PC-3 (cell line): ENCODE measurements at regions of chr5 and their contacts with region 1.

Region 1: GRCh38 chr5:140926443-140927227 is 536 bp downstream of the PCDHAC1 start:
- DNase-seq: peak; percentile 82
- ATAC-seq: peak; percentile 92
- H3K4me3 ChIP-seq: peak overlapping the region; percentile 91
- H3K27ac ChIP-seq: peak overlapping the region; percentile 45
- H3K4me1 ChIP-seq: peaks cover 8% of the 10 kb centered on the region
- H3K27me3 ChIP-seq: no peaks in the 10 kb centered on the region
- CTCF ChIP-seq: peak; percentile 76

Region 2: DNA sequence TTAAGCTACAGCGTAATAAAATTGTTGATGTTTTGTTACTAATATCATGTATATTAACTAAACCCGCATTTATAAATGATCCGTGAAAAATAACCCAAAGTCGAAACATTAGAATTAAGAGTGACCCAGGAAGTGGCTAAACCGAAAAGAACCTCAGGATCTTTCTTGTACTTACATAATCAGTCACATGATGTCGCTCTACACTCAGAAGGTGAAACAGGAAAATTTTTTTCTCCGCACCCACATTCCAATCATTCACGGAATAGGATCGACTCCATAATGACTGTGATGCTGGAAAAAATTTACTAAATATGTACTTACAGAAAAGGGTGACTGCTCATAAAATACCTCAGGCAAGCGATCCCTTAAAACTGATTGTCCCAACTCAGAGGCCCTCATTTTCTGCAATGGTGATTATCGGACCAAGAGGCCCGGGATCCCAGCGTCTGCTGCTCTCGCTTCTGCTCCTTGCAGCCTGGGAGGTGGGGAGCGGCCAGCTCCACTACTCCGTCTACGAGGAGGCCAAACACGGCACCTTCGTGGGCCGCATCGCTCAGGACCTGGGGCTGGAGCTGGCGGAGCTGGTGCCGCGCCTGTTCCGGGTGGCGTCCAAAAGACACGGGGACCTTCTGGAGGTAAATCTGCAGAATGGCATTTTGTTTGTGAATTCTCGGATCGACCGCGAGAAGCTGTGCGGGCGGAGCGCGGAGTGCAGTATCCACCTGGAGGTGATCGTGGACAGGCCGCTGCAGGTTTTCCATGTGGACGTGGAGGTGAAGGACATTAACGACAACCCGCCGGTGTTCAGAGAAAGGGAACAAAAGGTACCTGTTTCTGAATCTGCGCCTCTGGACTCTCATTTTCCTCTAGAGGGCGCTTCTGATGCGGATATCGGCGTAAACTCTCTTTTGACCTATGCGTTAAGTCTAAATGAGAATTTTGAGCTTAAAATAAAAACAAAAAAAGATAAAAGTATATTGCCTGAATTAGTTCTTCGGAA is 51.3 kb before region 1 on chr5 and contains the start of gene PCDHA12:
- CTCF ChIA-PET with region 1: no interaction called
- POLR2A ChIA-PET with region 1: interaction called, 3 read pairs
- intact Hi-C with region 1: loop called (anchors 2 kb)
- DNase-seq: peak; percentile 82
- ATAC-seq: peak; percentile 80
- H3K4me3 ChIP-seq: peak within 1 kb of the TSS; percentile 86
- H3K27ac ChIP-seq: peak within 1 kb of the TSS; percentile 42; the same call in 1 of the 2 replicates
- H3K4me1 ChIP-seq: peaks cover 14% of the 10 kb centered on the region
- H3K27me3 ChIP-seq: no peaks in the 10 kb centered on the region
- CTCF ChIP-seq: peak; percentile 67
- total RNA-seq, gene PCDHA12: 7.0 and 8.2 TPM in 2 replicates

Region 3: DNA sequence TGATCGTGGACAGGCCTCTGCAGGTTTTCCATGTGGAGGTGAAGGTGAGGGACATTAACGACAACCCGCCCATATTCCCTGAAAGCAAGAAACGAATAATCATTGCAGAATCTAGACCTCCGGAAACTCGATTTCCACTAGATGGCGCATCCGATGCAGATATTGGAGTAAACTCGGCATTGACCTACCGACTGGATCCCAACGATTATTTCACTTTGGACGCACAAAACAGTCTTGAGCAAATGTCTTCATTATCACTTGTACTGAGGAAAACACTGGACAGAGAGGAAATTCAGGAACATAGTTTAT is 44.1 kb before region 1 on chr5:
- CTCF ChIA-PET with region 1: interaction called, 3 read pairs
- POLR2A ChIA-PET with region 1: no interaction called
- intact Hi-C with region 1: loop called (anchors 1 kb)
- DNase-seq: peak; percentile 81
- ATAC-seq: peak; percentile 74
- H3K4me3 ChIP-seq: peak overlapping the region; percentile 73
- H3K27ac ChIP-seq: 0 out of 2 replicates have a peak overlapping the region, but pooled peaks have one; percentile 33
- H3K4me1 ChIP-seq: peaks cover 8% of the 10 kb centered on the region; the same call in 1 of the 2 replicates
- H3K27me3 ChIP-seq: no peaks in the 10 kb centered on the region
- CTCF ChIP-seq: peak; percentile 59

Region 4: GRCh38 chr5:140966293-140967225 is 39.9 kb after region 1 on chr5 and contains the start of gene PCDHAC2:
- CTCF ChIA-PET with region 1: no interaction called
- POLR2A ChIA-PET with region 1: no interaction called
- intact Hi-C with region 1: loop called (anchors 5 kb)
- DNase-seq: peak; percentile 60
- ATAC-seq: peak; percentile 79
- H3K4me3 ChIP-seq: peak within 1 kb of the TSS; percentile 90
- H3K27ac ChIP-seq: no peak within 1 kb of the TSS
- H3K4me1 ChIP-seq: peaks cover 21% of the 10 kb centered on the region
- H3K27me3 ChIP-seq: no peaks in the 10 kb centered on the region
- CTCF ChIP-seq: no peak
- total RNA-seq, gene PCDHAC2: 4.2 and 8.2 TPM in 2 replicates

Region 5: DNA sequence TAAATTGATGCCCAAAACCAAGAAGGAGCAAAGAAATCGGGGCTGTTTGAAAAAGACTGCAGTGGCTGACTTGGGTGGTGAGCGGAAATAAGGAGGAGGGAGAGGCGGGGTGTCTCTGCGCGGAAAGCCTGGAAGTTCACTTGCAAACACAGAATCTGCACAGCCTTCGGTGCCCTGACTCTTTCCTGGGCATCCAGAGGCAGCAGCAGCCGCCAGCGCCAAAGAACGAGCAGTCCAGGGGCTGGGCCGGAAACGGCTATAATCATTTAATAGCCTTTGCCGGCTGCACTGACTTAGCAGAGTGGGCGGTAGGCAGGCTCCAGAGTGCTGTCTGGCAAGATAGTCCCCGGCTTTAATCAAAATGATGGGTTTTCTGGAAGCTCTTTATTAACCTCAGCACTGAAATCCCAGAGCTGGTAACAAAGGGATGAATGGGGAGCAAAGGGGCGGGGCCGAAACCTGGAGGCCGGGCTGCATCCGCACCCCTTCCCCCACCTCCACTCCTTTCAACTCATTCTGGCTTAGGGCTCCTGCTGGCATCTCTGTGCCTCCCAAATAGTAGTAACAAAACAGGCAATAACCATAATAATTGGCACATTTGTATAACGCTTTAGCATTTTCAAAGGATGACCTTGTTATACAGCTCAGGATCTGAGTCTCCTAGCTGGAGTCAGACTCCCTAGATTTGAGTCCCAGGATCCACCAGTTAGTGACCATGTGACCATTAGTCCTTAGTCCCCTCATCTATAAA is 75.4 kb after region 1 on chr5:
- CTCF ChIA-PET with region 1: interaction called, 7 read pairs
- POLR2A ChIA-PET with region 1: interaction called, 5 read pairs
- intact Hi-C with region 1: loop called (anchors 2 kb)
- DNase-seq: peak; percentile 48
- ATAC-seq: peak; percentile 47
- H3K4me3 ChIP-seq: peak overlapping the region; percentile 66
- H3K27ac ChIP-seq: peak overlapping the region; percentile 90
- H3K4me1 ChIP-seq: peaks cover 39% of the 10 kb centered on the region
- H3K27me3 ChIP-seq: no peaks in the 10 kb centered on the region
- CTCF ChIP-seq: no peak

Region 6: DNA sequence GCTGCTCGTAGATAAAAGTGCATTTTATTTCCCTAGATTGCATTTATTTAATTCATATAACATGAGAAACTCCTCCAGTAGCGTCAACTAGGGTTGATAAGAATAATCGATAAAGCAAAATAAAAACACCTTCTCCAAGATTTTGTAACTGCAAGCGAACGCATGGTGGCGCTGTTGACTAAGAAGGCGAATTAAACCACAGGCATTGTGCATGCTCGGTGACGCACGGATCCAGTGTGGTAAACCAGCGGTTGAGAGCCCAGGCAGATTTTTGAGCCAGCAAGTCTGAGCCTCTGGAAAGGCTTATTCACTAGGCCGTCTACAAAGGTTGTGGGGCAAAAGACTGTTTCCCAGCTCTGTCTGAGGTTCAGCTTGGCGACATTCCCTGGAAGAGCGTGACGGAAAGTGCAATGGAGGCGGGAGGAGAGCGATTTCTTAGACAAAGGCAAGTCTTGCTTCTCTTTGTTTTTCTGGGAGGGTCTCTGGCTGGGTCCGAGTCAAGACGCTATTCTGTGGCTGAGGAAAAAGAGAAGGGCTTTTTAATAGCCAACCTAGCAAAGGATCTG is 173.7 kb after region 1 on chr5 and contains the start of gene PCDHB3:
- CTCF ChIA-PET with region 1: no interaction called
- POLR2A ChIA-PET with region 1: no interaction called
- intact Hi-C with region 1: no loop called
- DNase-seq: no peak
- ATAC-seq: no peak
- H3K4me3 ChIP-seq: no peak within 1 kb of the TSS
- H3K27ac ChIP-seq: no peak within 1 kb of the TSS
- H3K4me1 ChIP-seq: no peaks in the 10 kb centered on the region
- H3K27me3 ChIP-seq: no peaks in the 10 kb centered on the region
- CTCF ChIP-seq: no peak
- total RNA-seq, gene PCDHB3: 0.36 and 0.58 TPM in 2 replicates

Region 7: GRCh38 chr5:141272906-141273305 is 346.3 kb after region 1 on chr5:
- CTCF ChIA-PET with region 1: no interaction called
- POLR2A ChIA-PET with region 1: no interaction called
- intact Hi-C with region 1: no loop called
- DNase-seq: no peak
- ATAC-seq: no peak
- H3K4me3 ChIP-seq: no peak overlapping the region
- H3K27ac ChIP-seq: no peak overlapping the region
- H3K4me1 ChIP-seq: no peaks in the 10 kb centered on the region
- H3K27me3 ChIP-seq: no peaks in the 10 kb centered on the region
- CTCF ChIP-seq: peak; percentile 17; the same call in 1 of the 2 replicates